Gastrocnemius medialis (tissue), 4 donors: ENCODE measurements at regions of chr9 and their contacts with region 1.

Region 1: DNA sequence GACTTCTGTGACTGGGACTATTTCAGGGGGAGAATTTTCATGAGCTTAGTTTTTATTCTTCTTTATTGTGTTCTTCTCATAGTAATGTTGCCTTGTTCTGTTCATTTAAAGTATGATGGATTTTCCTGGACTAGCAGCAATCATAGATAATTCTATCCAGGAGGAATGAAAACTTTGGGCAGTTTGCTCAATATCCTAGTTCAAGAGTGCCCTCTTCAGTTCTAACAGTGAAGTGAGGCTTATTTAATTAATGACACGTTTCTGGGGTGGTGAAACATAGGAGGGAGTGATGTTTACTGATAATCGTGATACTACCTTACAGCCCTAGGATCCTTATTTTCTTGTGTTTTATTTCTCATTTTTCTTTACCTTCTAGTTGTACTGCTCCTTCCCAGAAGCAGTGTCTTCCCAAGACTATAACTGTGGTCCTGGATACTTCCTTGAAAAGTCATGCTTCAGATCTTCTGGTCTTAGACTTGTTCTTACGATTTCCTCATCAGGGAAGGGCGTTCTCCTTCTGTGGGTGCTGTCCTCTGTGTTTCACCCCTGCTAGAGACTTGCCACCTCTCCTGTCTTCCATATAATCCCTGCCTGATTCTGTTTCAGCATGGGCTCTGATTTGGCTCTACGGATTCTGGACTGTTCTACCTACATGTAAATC is 57.4 kb downstream of the CFAP95 start:
- DNase-seq: no peak
- ATAC-seq: peak in 1 of 2 donors; percentile 72
- H3K4me3 ChIP-seq: no peak overlapping the region
- H3K27ac ChIP-seq: no peak overlapping the region
- H3K4me1 ChIP-seq: peaks cover 20% of the 10 kb centered on the region in 2 donors
- H3K27me3 ChIP-seq: no peaks in the 10 kb centered on the region
- CTCF ChIP-seq: peak in 4 of 5 experiments; percentile 37 to 56 (median 44)
- POLR2A ChIP-seq: no peak

Region 2: GRCh38 chr9:69253057-69253456 is 624.9 kb before region 1 on chr9:
- in situ Hi-C with region 1: no loop called
- intact Hi-C with region 1: no loop called
- DNase-seq: no peak
- ATAC-seq: no peak
- H3K4me3 ChIP-seq: no peak overlapping the region
- H3K27ac ChIP-seq: peak overlapping the region in 1 of 4 donors; percentile 23
- H3K4me1 ChIP-seq: peaks cover 0 to 6% of the 10 kb centered on the region in 2 donors
- H3K27me3 ChIP-seq: no peaks in the 10 kb centered on the region
- CTCF ChIP-seq: no peak
- POLR2A ChIP-seq: no peak

Region 3: DNA sequence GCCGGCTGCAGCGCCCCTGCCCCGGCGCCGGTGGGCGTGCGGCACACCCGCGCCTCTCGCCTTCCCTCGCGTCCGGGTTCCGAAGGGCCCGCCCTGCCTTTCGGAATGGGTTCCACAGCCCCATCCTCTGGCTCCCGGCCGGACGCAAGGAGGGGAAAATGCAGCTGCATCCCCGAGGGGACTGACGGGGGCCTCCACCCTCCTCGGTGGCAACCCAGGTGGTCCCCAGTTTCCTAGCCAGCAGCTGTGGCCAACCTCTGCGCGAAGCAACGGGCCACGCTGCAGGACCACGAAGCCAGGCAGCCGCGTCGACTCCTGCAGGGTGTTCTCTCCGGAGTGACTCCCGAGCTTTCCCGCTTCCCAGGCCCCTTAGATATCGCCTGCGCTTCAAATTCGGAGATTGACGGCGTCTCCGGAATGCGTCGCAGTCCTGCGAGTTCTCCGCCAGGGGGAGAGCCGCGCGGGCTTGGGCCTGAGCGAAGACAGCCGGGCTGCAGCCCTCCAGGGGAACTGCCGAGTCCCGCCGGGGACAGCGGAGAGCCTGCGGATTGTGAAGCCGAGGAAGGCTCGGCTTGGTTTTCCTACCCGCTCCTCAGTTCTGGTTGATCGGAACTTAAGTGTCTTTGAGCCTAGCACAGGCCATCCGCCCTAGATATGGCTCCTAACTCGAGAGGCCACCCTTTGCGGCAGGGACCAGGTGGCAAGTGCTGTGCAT is 205.2 kb before region 1 on chr9:
- in situ Hi-C with region 1: loop called in 2 of 4 experiments (anchors 10 to 25 kb)
- intact Hi-C with region 1: loop called (anchors 2 kb)
- DNase-seq: peak; percentile 57 to 63
- ATAC-seq: peak; percentile 85 to 91
- H3K4me3 ChIP-seq: peak overlapping the region; percentile 75 to 85 (median 78)
- H3K27ac ChIP-seq: peak overlapping the region; percentile 60 to 76 (median 66)
- H3K4me1 ChIP-seq: peaks cover 6 to 20% of the 10 kb centered on the region in 2 donors
- H3K27me3 ChIP-seq: no peaks in the 10 kb centered on the region
- CTCF ChIP-seq: peak; percentile 58 to 91 (median 84)
- POLR2A ChIP-seq: no peak

Region 4: DNA sequence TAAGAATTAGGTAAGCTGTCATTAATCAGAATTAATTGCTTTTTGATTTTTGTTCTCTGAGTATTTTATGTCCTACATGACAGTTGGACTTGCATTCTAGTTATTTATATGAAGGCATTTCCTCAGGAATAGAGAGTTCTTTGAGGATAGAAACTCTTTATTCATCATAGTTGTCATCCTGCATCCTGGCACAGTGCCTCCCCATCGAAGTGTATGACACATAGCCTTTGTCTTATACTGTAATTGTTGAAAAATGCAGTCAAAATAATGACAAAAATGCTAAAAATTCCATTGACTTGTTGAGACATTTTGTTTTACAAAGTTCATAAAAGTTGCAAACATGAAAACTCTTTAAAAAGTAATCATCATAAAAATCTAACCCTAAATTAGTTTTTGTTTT is 20.9 kb before region 1 on chr9:
- in situ Hi-C with region 1: no loop called
- intact Hi-C with region 1: no loop called
- DNase-seq: no peak
- ATAC-seq: no peak
- H3K4me3 ChIP-seq: no peak overlapping the region
- H3K27ac ChIP-seq: no peak overlapping the region
- H3K4me1 ChIP-seq: no peaks in the 10 kb centered on the region
- H3K27me3 ChIP-seq: no peaks in the 10 kb centered on the region
- CTCF ChIP-seq: no peak
- POLR2A ChIP-seq: no peak